Dorsolateral prefrontal cortex (tissue), 120 donors: ENCODE measurements at regions of chr15 and their contacts with region 1.

Region 1: DNA sequence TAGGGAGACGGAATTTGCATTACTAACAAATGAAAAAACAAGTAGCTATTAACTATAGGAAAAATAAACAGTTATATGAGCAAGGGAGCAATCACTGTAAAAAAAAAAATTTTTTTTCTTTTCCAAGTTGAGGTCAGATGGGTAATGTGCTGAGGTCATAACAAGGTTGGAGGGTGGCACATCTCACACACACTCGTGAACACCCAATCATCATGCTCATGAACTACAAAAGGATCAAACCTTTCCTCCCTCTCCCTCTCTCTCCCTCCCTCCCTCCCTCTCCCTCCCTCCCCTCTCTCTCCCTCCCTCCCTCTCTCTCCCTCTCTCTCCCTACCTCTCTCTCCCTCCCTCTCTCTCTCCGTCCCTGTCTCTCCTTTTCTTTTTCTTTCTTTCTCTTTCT is 97.9 kb upstream of the CGNL1 start:
- DNase-seq: no peak
- H3K4me3 ChIP-seq: no peak overlapping the region
- H3K27ac ChIP-seq: no peak overlapping the region
- H3K27me3 ChIP-seq: no peaks in the 10 kb centered on the region
- CTCF ChIP-seq: no peak

Region 2: DNA sequence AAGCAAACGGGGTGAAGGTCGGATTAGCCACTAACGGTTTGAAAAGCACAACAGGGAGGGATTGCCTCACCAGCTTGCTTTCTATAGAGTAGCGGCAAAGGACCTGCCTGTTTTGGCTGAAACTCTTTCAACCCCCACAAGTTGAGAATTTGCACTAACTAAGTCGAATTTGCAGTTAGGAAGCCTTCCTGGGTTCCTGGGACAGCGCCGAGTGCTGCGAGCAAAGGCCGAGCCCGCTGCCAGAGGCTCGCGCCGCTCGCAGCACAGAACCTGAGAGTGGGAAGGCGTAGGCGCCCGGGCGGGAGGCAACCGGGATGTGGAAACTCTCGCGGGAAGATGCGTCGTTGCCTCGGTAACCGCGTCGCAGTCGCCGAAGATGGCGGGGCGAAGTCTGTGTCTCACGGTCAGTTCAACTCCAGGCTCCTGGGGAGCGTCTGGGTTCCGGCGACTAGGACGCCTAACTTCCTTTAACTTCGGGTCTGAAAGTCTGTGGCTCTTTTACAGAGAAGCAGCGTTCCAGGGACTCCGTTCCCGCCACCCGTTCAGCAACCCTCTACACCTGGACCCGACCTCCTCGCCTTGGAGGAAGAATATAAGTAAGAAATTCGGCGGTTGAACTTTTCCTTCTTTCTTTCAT is 913.2 kb before region 1 on chr15 and contains the start of gene TEX9:
- intact Hi-C with region 1: no loop called
- DNase-seq: peak; percentile 53 to 87 (median 80)
- H3K4me3 ChIP-seq: peak within 1 kb of the TSS; percentile 44 to 85 (median 74)
- H3K27ac ChIP-seq: peak within 1 kb of the TSS in 7 of 59 donors; percentile 9 to 72 (median 47)
- H3K27me3 ChIP-seq: no peaks in the 10 kb centered on the region
- CTCF ChIP-seq: peak in 2 of 56 donors; percentile 9 to 15
- total RNA-seq, gene TEX9: 3.4 to 17.0 (median 7.2) TPM

Region 3: GRCh38 chr15:57235873-57236272 is 42.6 kb before region 1 on chr15:
- intact Hi-C with region 1: loop called in 1 of 2 experiments (anchors 5 kb)
- DNase-seq: no peak
- H3K4me3 ChIP-seq: no peak overlapping the region
- H3K27ac ChIP-seq: peak overlapping the region in 3 of 59 donors; percentile 4 to 53 (median 18)
- H3K27me3 ChIP-seq: no peaks in the 10 kb centered on the region
- CTCF ChIP-seq: no peak

Region 4: DNA sequence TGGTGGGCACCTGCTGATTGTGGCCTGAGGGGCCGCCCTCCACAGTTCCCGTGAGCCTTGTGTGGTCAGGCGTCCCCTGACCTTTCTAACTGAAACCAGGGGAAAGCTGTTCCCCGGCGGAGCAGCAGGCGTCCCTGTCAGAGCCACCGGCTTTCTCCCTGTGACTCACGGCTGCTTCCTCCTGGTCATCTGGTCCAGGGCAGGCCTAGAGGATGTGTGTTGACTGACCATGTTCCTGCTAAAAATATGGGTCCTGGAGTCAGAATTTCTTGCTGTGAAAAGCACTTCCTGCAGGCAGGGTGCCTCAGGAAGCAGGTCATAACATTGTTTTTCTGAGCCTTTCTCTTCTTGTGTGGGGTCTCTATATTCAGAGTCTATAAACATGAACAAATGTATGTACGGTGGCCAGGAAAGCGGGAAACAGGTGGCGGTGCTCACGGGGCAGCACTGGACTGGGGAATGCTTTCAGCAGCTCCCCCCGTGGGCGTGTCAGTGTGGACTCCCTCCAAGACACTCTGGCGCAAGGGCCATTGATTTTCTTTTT is 59.5 kb after region 1 on chr15:
- intact Hi-C with region 1: no loop called
- DNase-seq: no peak
- H3K4me3 ChIP-seq: no peak overlapping the region
- H3K27ac ChIP-seq: peak overlapping the region in 26 of 59 donors; percentile 2 to 75 (median 42)
- H3K27me3 ChIP-seq: no peaks in the 10 kb centered on the region
- CTCF ChIP-seq: peak in 2 of 56 donors; percentile 9 to 10

Region 5: GRCh38 chr15:57353317-57353804 is 74.9 kb after region 1 on chr15:
- intact Hi-C with region 1: no loop called
- DNase-seq: no peak
- H3K4me3 ChIP-seq: no peak overlapping the region
- H3K27ac ChIP-seq: no peak overlapping the region
- H3K27me3 ChIP-seq: no peaks in the 10 kb centered on the region
- CTCF ChIP-seq: no peak

Region 6: DNA sequence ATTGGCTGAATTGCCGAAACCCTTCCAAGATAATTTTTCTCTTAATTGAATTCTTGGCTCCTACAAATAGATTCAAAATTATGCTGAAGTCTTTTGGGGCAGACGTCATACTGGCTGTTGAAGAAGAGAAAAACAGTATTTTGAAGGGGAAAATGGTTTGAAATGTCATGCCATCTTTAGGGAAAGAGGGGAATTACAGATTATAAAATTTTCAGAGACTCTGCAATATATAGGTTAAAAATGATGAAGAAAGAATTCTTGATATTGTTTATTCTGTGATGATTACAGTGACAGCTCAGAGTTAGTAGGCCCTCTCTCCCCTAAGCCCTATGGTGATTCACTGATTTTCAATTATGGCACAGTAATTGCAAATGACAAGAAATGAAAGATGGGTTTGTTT is 183.9 kb after region 1 on chr15:
- intact Hi-C with region 1: no loop called
- DNase-seq: no peak
- H3K4me3 ChIP-seq: no peak overlapping the region
- H3K27ac ChIP-seq: peak overlapping the region in 37 of 59 donors; percentile 9 to 86 (median 67)
- H3K27me3 ChIP-seq: no peaks in the 10 kb centered on the region
- CTCF ChIP-seq: peak in 52 of 56 donors; percentile 10 to 63 (median 39)